Activated CD8-positive, alpha-beta T cell treated with anti-CD3 and anti-CD28 coated beads, Interleukin-2, amount 10 ng/mL, durations not matched to agents 7 days and 5 days (primary cell): ENCODE measurements at regions of chr1 and their contacts with region 1.

Region 1: GRCh38 chr1:224458996-224459395 is 24.4 kb upstream of the WDR26 start:
- DNase-seq: no peak
- ATAC-seq: no peak
- H3K4me3 Mint-ChIP-seq: no peak overlapping the region
- H3K27ac Mint-ChIP-seq: no peak overlapping the region
- H3K4me1 Mint-ChIP-seq: peaks cover 31% of the 10 kb centered on the region
- H3K27me3 Mint-ChIP-seq: no peaks in the 10 kb centered on the region

Region 2: GRCh38 chr1:224356685-224357625 is 102.0 kb before region 1 on chr1 and contains the start of gene CNIH4:
- CTCF ChIA-PET with region 1: interaction called, 11 read pairs
- POLR2A ChIA-PET with region 1: no interaction called
- DNase-seq: peak; percentile 96
- ATAC-seq: peak; percentile 99
- H3K4me3 Mint-ChIP-seq: peak within 1 kb of the TSS; percentile 79
- H3K27ac Mint-ChIP-seq: peak within 1 kb of the TSS; percentile 84
- H3K4me1 Mint-ChIP-seq: peaks cover 53% of the 10 kb centered on the region
- H3K27me3 Mint-ChIP-seq: no peaks in the 10 kb centered on the region
- total RNA-seq, gene CNIH4: 41.3 to 43.7 TPM

Region 3: DNA sequence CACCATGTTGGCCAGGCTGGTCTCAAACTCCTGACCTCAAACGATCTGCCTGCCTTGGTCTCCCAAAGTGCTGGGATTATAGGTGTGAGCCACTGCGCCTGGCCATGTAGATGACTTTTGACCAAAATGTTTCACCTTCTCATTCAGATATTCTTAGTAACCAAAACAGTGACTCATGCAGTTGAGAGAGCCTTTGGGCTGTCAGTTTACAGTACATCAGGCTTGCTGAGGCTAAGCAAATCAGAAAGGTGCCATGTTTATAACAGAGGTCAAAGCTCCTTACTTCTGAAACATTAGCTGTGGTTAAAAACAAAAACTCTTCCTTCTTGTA is 81.4 kb before region 1 on chr1:
- CTCF ChIA-PET with region 1: interaction called, 13 read pairs
- POLR2A ChIA-PET with region 1: no interaction called
- DNase-seq: peak; percentile 50
- ATAC-seq: peak; percentile 47
- H3K4me3 Mint-ChIP-seq: peak overlapping the region; percentile 40
- H3K27ac Mint-ChIP-seq: peak overlapping the region; percentile 88
- H3K4me1 Mint-ChIP-seq: peaks cover 91% of the 10 kb centered on the region
- H3K27me3 Mint-ChIP-seq: no peaks in the 10 kb centered on the region

Region 4: DNA sequence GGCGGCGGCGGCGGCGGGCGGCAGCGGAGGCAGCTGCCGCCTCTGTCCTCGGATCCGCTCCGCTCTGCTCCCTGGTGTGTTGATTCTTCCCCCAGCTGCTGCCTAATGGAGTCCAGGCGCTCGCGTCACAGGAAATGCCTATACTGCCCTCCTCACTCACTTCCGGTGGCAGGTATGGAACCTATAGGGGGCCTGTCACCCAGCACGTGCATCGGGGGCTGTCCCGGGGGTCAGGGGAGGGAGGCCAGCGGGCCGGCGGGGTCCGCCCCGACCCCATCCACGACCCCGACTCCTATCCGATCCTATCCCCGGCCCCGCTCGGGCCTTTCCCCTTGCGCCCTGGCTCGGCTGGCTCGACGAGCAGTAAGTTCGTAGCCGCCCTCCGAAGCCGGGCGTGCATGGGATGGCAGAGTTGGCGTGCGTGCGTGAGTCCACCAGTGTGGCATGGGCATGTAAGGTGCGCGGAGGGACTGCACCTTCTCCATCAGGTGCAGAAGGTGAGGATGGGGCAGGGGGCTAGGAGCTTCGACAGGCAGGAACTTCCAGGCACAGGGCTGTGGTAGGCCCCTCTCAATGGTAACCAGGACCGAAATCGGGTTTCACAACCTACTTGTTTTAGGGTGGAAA is 24.2 kb before region 1 on chr1 and contains the start of gene WDR26:
- CTCF ChIA-PET with region 1: interaction called, 65 read pairs
- POLR2A ChIA-PET with region 1: interaction called, 8 read pairs
- DNase-seq: peak; percentile 92
- ATAC-seq: peak; percentile 89
- H3K4me3 Mint-ChIP-seq: peak within 1 kb of the TSS; percentile 92
- H3K27ac Mint-ChIP-seq: peak within 1 kb of the TSS; percentile 99
- H3K4me1 Mint-ChIP-seq: peaks cover 54% of the 10 kb centered on the region
- H3K27me3 Mint-ChIP-seq: no peaks in the 10 kb centered on the region
- total RNA-seq, gene WDR26: 63.8 to 66.2 TPM

Region 5: DNA sequence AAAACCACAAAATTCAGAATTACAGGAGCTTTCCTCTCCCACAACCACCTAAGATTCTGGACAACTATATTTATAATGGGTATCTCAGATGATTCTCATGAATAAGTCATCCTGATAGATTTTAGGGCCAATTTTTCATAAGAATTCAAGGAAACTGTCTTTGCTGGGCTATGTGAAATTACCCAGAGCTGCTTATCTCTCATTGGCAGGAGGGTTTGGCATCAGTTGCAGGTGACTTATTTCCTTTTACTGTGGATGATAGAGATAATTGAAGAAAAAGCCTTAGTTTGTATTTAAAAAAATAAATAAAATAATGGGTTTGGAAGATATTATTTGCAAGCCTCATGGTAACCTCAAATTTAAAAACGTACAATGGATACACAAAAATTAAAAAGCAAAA is 13.8 kb after region 1 on chr1:
- CTCF ChIA-PET with region 1: interaction called, 11 read pairs
- POLR2A ChIA-PET with region 1: no interaction called
- DNase-seq: no peak
- ATAC-seq: no peak
- H3K4me3 Mint-ChIP-seq: no peak overlapping the region
- H3K27ac Mint-ChIP-seq: no peak overlapping the region
- H3K4me1 Mint-ChIP-seq: no peaks in the 10 kb centered on the region
- H3K27me3 Mint-ChIP-seq: peaks cover under 1% of the 10 kb centered on the region

Region 6: GRCh38 chr1:224503161-224504118 is 44.4 kb after region 1 on chr1:
- CTCF ChIA-PET with region 1: interaction called, 19 read pairs
- POLR2A ChIA-PET with region 1: no interaction called
- DNase-seq: peak; percentile 39
- ATAC-seq: no peak
- H3K4me3 Mint-ChIP-seq: no peak overlapping the region
- H3K27ac Mint-ChIP-seq: peak overlapping the region; percentile 80
- H3K4me1 Mint-ChIP-seq: peaks cover 56% of the 10 kb centered on the region
- H3K27me3 Mint-ChIP-seq: no peaks in the 10 kb centered on the region